ENCODE measurements at regions of chr9 and their contacts with region 1.

Region 1: GRCh38 chr9:34072868-34073590 is 24.3 kb upstream of the UBAP2 start:
- DNase-seq: no peak
- ATAC-seq: peak; percentile 58

Region 2: GRCh38 chr9:33867747-33868439 is 205.1 kb before region 1 on chr9:
- intact Hi-C with region 1: no loop called
- DNase-seq: no peak
- ATAC-seq: peak; percentile 88

Region 3: DNA sequence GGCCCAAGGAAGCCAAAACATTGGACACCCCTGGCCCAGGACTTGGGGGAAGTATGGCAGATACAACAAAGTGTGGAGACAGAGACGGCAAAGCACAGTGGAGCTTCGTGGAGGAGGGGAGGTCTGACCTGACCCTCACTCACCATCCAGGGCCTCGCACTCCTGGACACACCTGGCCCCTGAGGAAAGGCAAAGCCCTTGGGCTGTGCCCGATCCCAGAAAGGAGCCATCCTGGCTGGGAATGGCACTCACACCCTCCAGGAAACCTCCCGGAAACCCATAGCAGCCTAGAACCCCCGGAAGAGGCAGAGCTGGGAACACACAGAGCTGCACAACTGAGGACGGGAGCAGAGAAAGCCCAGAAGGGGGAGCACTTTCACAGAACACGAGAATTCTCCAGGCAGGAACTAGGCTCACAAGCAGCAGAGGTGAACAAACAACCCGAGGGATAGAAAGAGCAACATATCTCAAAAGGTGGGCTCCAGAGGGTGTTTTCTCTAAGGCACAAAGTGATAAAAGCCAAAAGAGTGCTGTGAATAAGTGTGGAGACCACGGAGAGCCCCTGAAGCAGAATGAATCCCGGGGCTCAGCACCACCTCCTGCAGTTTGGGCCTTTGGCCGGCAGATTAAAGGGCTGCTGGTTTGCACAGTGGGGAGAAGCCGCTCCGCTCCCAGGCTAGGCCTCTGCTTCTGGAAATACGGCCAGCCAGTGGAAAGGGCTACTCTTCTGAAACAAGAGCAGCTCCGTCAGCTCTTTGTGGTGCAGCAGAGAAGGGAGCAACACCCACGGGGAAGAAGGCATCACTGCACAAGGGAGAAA is 147.8 kb before region 1 on chr9:
- intact Hi-C with region 1: loop called (anchors 1 kb)
- DNase-seq: no peak
- ATAC-seq: peak; percentile 61

Region 4: GRCh38 chr9:34010979-34011378 is 62.0 kb before region 1 on chr9:
- intact Hi-C with region 1: loop called (anchors 5 kb)
- DNase-seq: no peak
- ATAC-seq: no peak

Measured in Right ventricle myocardium inferior (tissue), 1 donor.